ENCODE measurements at regions of chr1 and their contacts with region 1.

Region 1: DNA sequence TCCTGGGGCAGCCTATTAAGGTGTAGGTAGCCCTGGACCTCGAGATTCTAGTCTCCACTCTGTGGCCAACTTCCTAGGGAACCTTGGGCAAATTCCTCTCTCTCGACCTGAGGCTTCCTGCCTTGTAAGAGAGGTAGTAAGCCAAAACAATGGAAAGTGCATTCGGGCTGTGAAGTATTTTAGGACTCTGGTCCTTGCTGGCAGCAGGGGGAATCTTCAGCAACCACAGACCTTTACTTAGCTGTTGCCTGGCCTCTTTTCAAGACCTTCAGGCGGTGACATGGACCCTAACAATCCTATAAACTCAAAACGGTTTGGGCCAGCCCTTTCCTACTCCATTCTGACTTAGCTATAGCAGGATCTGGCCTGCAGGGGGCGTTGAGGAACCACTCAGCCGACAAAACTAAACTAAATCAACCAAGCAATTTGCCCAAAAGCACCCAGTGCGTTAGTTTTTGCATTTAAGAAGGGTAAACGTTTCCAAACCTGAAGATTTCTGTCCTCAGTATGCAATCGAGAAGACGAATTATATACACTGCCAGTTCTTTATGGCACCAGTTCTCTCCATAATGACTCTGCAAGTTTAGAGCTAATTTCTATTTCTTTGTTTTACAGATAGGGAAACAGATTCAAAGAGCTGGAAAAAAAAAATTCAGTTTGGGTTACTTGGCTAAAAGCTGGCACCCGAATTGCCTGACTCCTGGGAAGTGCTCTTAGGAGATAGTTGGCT is 10.9 kb upstream of the SESN2 start:
- DNase-seq: peak; percentile 81 to 90 (median 88)
- H3K4me3 ChIP-seq: peak overlapping the region in 5 of 7 experiments; percentile 24 to 68 (median 50)
- H3K27ac ChIP-seq: peak overlapping the region; percentile 56 to 95
- H3K4me1 ChIP-seq: peaks cover 28 to 60% (median 48%) of the 10 kb centered on the region in 4 experiments
- H3K27me3 ChIP-seq: no peaks in the 10 kb centered on the region

Region 2: GRCh38 chr1:28144203-28145135 is 104.0 kb before region 1 on chr1:
- CTCF ChIA-PET with region 1: no interaction called
- POLR2A ChIA-PET with region 1: no interaction called
- DNase-seq: no peak
- H3K4me3 ChIP-seq: no peak overlapping the region
- H3K27ac ChIP-seq: no peak overlapping the region
- H3K4me1 ChIP-seq: peaks cover 0 to 10% (median under 1%) of the 10 kb centered on the region in 4 experiments
- H3K27me3 ChIP-seq: no peaks in the 10 kb centered on the region

Region 3: DNA sequence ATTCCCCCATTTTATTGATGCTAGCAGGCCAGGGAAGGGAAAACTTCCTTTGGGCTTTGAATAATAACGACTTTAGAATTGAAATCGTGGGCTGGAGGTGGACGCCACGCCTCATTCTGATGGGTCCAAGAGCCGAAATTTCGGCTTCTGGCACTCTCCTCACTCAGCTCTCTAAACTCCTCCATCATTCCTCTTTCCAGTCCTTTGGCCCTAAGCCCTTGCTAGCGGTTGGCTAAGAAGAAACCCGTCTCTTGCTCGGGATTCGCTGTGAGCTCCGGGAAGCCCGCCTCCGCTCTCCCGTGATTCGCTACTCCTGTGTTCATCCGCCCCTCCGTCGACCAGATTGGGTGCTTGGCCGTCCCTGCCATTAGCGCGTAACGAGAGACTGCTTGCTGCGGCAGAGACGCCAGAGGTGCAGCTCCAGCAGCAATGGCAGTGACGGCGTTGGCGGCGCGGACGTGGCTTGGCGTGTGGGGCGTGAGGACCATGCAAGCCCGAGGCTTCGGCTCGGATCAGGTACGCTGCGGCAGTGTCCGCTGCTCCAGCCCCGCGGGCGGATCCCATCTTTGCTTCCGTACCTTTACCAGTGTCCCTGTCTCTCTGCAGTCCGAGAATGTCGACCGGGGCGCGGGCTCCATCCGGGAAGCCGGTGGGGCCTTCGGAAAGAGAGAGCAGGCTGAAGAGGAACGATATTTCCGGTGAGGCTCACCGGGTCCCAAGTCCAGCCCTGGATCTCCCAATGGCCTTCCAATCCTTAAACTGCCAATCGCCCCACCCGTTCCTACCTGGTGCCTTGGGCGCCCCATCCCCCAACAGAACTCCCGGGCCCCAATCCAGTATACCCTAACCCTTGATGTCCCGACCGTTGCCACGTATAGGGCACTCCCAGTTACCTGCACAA is 12.4 kb before region 1 on chr1 and contains the start of gene ATP5IF1:
- CTCF ChIA-PET with region 1: interaction called, 12 read pairs
- POLR2A ChIA-PET with region 1: interaction called, 3 read pairs
- DNase-seq: peak; percentile 97 to 98 (median 98)
- H3K4me3 ChIP-seq: peak within 1 kb of the TSS; percentile 73 to 99 (median 96)
- H3K27ac ChIP-seq: peak within 1 kb of the TSS; percentile 69 to 88
- H3K4me1 ChIP-seq: peaks cover 16 to 43% (median 30%) of the 10 kb centered on the region in 4 experiments
- H3K27me3 ChIP-seq: no peaks in the 10 kb centered on the region

Region 4: DNA sequence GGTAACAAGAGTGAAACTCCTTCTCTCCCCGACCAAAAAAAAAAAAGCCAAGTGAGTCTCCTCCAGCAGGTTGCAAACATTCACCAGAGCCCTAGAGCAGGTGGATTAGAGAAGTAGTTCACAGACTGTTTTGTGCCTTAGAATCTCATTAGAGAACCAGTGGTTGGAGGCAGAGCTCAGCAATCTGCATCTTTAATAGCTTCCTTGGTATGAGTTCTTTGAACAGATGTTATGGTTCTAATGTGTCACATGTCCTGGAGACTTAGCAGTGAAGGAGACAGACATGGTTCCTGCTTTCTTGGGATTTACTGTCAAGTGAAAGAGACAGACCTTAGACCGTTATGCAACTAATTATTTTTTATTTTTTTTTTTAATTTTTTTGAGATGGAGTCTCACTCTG is 37.7 kb after region 1 on chr1:
- CTCF ChIA-PET with region 1: interaction called, 13 read pairs
- POLR2A ChIA-PET with region 1: interaction called, 3 read pairs
- DNase-seq: peak; percentile 45 to 90 (median 84)
- H3K4me3 ChIP-seq: no peak overlapping the region
- H3K27ac ChIP-seq: no peak overlapping the region
- H3K4me1 ChIP-seq: peaks cover 0 to 30% (median 1%) of the 10 kb centered on the region in 4 experiments
- H3K27me3 ChIP-seq: no peaks in the 10 kb centered on the region

Region 5: GRCh38 chr1:28354121-28354520 is 105.7 kb after region 1 on chr1:
- CTCF ChIA-PET with region 1: interaction called, 17 read pairs
- POLR2A ChIA-PET with region 1: no interaction called
- DNase-seq: no peak
- H3K4me3 ChIP-seq: no peak overlapping the region
- H3K27ac ChIP-seq: no peak overlapping the region
- H3K4me1 ChIP-seq: peaks cover 0 to 4% (median under 1%) of the 10 kb centered on the region in 4 experiments
- H3K27me3 ChIP-seq: no peaks in the 10 kb centered on the region

Region 6: DNA sequence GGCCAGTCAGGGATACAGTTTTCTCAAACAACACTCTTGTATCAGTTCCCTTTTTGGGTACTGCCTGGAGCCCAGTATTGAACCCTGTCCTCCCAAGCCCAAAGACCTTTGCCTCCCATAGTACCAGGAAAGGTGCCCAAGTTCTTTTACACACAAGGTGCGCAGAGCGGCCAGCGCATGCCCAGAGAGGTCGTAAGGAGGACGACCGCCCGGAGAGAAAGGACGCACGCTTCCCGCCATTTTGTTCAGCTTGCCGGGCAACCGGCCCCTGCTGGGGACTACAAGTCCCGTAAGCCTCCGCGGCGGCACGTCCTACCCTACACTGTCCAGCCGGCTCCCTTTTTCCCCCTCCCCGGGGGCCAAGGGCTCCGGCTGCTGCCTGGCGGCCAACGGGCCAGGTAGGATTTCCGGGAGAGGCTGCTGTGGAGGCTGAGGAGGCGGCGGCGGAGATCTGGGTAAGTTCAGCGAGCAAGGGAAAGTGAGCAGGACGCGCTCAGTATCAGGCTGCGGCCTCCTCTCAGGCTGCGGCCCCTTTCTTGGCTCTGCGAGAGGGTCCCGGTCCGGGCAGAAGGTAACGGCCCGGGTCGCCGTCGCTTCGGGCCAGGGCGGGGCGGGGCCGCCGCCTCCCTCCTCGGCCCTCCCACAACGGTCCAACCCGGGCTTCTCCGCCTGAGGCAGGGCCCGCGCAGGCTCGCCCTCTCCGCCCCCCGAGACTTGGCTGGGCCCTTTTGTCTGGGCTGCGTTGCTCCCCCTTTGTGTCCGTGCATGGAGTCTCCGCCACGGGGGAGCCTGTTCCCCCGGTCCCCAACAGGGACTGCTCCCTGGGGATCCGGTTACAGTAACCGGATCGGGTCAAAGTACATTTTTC is 121.2 kb after region 1 on chr1 and contains the start of gene PHACTR4:
- CTCF ChIA-PET with region 1: interaction called, 18 read pairs
- POLR2A ChIA-PET with region 1: interaction called, 3 read pairs
- DNase-seq: peak; percentile 81 to 86 (median 85)
- H3K4me3 ChIP-seq: peak within 1 kb of the TSS; percentile 78 to 97 (median 92)
- H3K27ac ChIP-seq: peak within 1 kb of the TSS; percentile 80 to 95
- H3K4me1 ChIP-seq: peaks cover 6 to 19% (median 16%) of the 10 kb centered on the region in 4 experiments
- H3K27me3 ChIP-seq: no peaks in the 10 kb centered on the region

Measured in common myeloid progenitor, CD34-positive (primary cell).